ENCODE measurements at regions of chr15 and their contacts with region 1.

Region 1: GRCh38 chr15:45448066-45448510 is 69.7 kb upstream of the GATM start:
- DNase-seq: no peak
- H3K4me3 Mint-ChIP-seq: no peak overlapping the region
- H3K27ac Mint-ChIP-seq: no peak overlapping the region
- H3K4me1 Mint-ChIP-seq: no peaks in the 10 kb centered on the region
- H3K27me3 Mint-ChIP-seq: no peaks in the 10 kb centered on the region

Region 2: DNA sequence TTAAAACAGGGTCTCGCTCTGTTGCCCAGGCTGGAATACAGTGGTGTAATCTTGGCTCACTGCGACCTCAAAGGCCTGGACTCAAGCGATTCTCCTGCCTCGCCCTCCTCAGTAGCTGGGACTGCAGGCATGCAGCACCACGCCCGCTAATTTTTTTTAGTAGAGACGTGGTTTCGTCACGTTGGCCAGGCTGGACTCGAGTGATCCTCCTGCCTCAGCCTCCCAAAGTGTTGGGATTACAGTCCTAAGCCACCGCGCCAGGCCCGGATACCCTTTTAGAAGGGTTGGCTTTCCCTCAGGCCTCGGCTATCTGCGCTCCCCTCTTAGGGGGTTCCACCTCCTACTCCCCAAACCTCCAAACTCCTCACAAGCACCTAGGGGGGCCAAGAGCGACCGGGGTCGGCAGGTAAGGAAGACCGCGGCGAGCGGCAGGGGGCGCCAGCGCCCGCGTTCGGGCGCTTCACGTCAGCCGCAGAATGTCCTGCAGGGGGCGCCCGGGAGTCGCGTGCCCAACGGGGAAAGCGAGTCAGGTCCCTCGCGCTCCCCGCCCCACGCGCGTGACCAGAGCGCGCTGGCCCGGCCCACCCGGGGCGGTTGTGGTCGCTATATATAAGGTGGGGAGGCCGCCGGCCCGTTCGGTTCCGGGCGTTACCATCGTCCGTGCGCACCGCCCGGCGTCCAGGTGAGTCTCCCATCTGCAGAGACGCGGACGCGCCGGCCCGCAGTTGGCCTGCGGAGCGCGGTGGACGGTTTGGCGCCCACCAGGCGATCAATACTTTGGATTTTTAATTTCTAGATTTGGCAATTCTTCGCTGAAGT is 17.9 kb before region 1 on chr15:
- CTCF ChIA-PET with region 1: interaction called, 16 read pairs
- intact Hi-C with region 1: no loop called
- DNase-seq: peak; percentile 83
- H3K4me3 Mint-ChIP-seq: peak overlapping the region; percentile 51
- H3K27ac Mint-ChIP-seq: no peak overlapping the region
- H3K4me1 Mint-ChIP-seq: peaks cover 2% of the 10 kb centered on the region
- H3K27me3 Mint-ChIP-seq: peaks cover 4% of the 10 kb centered on the region

Region 3: DNA sequence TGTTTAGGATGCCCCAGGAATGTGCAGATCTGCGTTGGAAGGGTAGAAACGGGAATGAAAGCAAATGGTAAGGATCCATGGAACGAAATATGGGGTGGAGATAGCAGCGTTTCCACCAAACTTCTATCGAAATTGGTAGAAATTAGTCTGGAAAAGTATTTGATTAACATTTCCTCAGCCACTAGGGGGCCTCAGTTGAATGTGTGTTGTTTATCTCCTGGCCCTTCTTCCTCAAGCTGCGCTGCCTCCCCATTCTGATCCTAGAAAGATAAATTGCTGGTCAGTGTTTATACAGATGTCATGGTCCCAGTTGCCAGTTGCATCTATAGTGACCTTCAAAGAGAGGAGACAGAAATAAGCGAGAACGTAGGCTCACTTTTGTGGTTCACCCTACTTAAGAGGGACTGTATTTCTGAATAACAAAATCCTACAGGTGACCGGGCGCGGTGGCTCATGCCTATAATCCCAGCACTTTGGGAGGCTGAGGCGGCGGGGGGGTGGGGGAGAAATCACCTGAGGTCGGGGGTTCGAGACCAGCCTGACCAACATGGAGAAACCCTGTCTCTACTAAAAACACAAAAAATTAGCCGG is 643.9 kb after region 1 on chr15:
- CTCF ChIA-PET with region 1: interaction called, 11 read pairs
- intact Hi-C with region 1: no loop called
- DNase-seq: peak; percentile 24
- H3K4me3 Mint-ChIP-seq: no peak overlapping the region
- H3K27ac Mint-ChIP-seq: no peak overlapping the region
- H3K4me1 Mint-ChIP-seq: no peaks in the 10 kb centered on the region
- H3K27me3 Mint-ChIP-seq: no peaks in the 10 kb centered on the region